ENCODE measurements at regions of chr16 and their contacts with region 1.

Region 1: GRCh38 chr16:53346-54236 is at the starts of genes POLR3K and SNRNP25:
- DNase-seq: peak; percentile 95
- H3K4me3 Mint-ChIP-seq: peak within 1 kb of the TSS; percentile 98
- H3K27ac Mint-ChIP-seq: peak within 1 kb of the TSS; percentile 96
- H3K4me1 Mint-ChIP-seq: peaks cover 11% of the 10 kb centered on the region
- H3K27me3 Mint-ChIP-seq: no peaks in the 10 kb centered on the region
- total RNA-seq, gene POLR3K: 90.6 and 91.3 TPM in 2 replicates
- total RNA-seq, gene SNRNP25: 98.9 and 101 TPM in 2 replicates

Region 2: DNA sequence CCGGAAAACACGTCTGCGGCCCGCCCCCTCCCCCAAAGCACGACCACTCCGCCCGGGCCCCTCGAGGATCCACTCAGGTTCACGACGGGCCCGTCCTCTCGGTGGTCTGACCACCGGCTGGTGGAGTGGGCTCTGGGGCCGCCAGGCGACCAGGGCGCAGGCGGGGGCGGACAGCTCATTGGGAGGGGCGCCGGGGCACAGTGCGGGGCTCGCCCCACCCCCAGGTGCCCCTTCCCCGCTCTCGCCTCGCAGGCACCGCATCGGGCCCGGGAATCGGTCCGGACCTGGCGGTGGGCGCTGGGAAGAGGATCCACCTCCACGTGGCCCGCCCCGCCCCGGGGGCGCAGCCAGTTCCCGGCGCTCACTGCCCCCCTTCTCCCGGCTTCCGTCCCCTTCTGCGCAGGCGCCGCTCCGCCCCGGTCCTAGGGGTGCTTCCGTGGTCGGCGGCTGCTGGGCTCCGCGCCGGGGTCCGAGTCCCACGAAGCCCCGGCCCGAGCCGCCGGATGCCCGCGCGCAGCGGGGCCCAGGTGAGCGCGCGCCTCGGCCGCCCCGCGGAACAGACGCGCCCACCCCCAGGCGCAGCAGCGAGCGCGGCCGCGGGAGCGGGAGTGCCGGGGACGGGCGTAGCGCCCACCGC is 24.3 kb after region 1 on chr16 and contains the start of gene MPG:
- intact Hi-C with region 1: loop called (anchors 1 kb)
- DNase-seq: peak; percentile 86
- H3K4me3 Mint-ChIP-seq: peak within 1 kb of the TSS; percentile 90
- H3K27ac Mint-ChIP-seq: peak within 1 kb of the TSS; percentile 78
- H3K4me1 Mint-ChIP-seq: peaks cover 25% of the 10 kb centered on the region
- H3K27me3 Mint-ChIP-seq: peaks cover 17% of the 10 kb centered on the region
- total RNA-seq, gene MPG: 73.9 and 77.5 TPM in 2 replicates

Region 3: GRCh38 chr16:84718-85406 is 31.3 kb after region 1 on chr16:
- intact Hi-C with region 1: loop called (anchors 2 kb)
- DNase-seq: peak; percentile 41
- H3K4me3 Mint-ChIP-seq: peak overlapping the region; percentile 20
- H3K27ac Mint-ChIP-seq: peak overlapping the region; percentile 94
- H3K4me1 Mint-ChIP-seq: peaks cover 22% of the 10 kb centered on the region
- H3K27me3 Mint-ChIP-seq: no peaks in the 10 kb centered on the region

Region 4: GRCh38 chr16:96935-97381 is 43.4 kb after region 1 on chr16:
- intact Hi-C with region 1: loop called (anchors 1 kb)
- DNase-seq: peak; percentile 86
- H3K4me3 Mint-ChIP-seq: no peak overlapping the region
- H3K27ac Mint-ChIP-seq: peak overlapping the region; percentile 48
- H3K4me1 Mint-ChIP-seq: no peaks in the 10 kb centered on the region
- H3K27me3 Mint-ChIP-seq: no peaks in the 10 kb centered on the region

Region 5: DNA sequence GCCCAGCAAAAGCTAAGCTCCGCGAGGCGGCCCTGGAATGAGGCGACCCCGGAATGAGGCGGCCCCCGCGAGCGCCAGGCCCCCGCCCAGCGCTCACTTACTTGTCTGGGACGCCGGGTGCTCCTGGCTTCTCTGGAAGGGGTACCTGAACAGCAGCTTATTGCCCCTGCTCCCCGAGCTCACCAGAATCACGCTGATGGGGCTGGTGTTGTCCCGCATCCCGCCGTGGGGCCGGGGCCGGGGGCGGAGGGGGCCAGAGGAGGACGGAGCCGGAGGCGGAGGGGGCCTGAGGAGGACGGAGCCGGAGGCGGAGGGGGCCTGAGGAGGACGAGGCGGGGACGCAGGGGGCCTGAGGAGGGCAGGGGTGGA is 84.4 kb after region 1 on chr16:
- intact Hi-C with region 1: loop called (anchors 1 kb)
- DNase-seq: peak; percentile 27
- H3K4me3 Mint-ChIP-seq: peak overlapping the region; percentile 86
- H3K27ac Mint-ChIP-seq: no peak overlapping the region
- H3K4me1 Mint-ChIP-seq: peaks cover 15% of the 10 kb centered on the region
- H3K27me3 Mint-ChIP-seq: peaks cover 2% of the 10 kb centered on the region

Region 6: GRCh38 chr16:154223-155030 is 100.8 kb after region 1 on chr16:
- intact Hi-C with region 1: no loop called
- DNase-seq: no peak
- H3K4me3 Mint-ChIP-seq: peak overlapping the region; percentile 55
- H3K27ac Mint-ChIP-seq: peak overlapping the region; percentile 10
- H3K4me1 Mint-ChIP-seq: peaks cover 6% of the 10 kb centered on the region
- H3K27me3 Mint-ChIP-seq: peaks cover 44% of the 10 kb centered on the region

Region 7: DNA sequence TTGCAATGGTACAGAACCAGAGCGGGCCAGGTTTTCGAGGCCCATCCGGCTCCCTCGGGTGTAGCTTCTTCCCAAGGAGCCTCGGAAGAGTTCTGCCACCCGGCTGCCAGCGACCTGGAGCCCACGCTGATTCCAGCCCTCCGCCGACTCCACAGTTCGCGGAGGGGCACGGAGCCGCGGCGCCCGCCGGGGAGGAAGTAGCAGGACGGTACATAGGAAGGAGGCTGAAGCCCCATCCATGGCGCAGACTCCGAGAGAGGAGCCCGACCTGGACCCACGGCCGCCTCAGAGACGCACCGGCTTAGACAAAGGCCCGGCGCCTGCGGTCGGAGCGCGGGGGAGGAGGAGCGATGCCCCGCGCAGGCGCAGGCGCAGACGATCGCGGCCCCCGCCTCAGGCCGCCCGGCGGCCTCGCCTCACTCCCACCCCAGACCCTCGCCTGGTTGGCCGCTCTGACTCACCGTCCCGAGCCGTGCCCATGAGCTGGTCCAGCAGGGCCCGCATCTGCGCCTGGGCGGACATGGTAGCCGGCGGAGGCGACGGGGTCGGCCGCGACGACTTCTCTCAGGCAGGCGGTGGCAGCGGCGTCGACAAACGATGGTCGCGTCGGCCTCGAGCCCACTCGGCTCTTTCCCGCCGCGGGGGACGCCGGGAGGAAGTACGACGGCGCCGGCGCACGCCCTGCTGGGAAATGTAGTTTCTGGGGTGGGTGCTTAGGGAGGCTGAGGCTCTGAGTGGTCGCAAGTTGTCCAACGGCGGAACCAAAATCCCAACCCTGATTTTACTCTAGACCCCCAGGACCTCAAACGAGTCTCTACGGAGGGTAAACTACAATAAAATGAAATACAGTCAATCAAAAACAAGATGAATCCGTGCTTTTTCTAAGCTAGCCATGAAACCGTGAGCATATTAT is 175.5 kb after region 1 on chr16 and contains the start of gene LUC7L:
- intact Hi-C with region 1: loop called (anchors 1 kb)
- DNase-seq: peak; percentile 80
- H3K4me3 Mint-ChIP-seq: peak within 1 kb of the TSS; percentile 94
- H3K27ac Mint-ChIP-seq: peak within 1 kb of the TSS; percentile 91
- H3K4me1 Mint-ChIP-seq: peaks cover 31% of the 10 kb centered on the region
- H3K27me3 Mint-ChIP-seq: no peaks in the 10 kb centered on the region
- total RNA-seq, gene LUC7L: 77.7 and 83.0 TPM in 2 replicates

Region 8: DNA sequence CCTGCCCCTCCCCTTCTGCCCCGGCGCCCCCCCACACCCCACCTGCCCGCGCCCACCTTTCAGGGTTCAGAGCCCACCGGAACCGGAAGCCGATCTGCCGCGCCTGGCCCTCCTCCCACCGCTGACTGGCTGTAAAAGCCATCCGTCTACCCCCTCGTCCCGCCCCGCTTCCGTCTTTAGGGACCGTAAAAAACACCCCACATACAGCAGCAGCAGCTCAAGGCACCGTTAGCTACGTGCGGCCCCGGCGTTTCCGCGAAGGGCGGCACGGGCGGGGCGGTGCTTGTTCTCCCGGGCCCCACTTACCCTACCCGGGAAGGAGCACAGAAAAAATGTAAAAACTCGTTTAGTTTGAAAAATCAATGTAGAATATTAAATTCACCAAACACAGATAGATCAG is 316.9 kb after region 1 on chr16 and contains the start of gene MRPL28:
- intact Hi-C with region 1: loop called (anchors 1 kb)
- DNase-seq: peak; percentile 92
- H3K4me3 Mint-ChIP-seq: peak within 1 kb of the TSS; percentile 86
- H3K27ac Mint-ChIP-seq: peak within 1 kb of the TSS; percentile 84
- H3K4me1 Mint-ChIP-seq: peaks cover 4% of the 10 kb centered on the region
- H3K27me3 Mint-ChIP-seq: no peaks in the 10 kb centered on the region
- total RNA-seq, gene MRPL28: 110 and 115 TPM in 2 replicates